Left colon (tissue), 2 donors: ENCODE measurements at regions of chr11 and their contacts with region 1.

Region 1: GRCh38 chr11:68297812-68298658 is 14.4 kb upstream of the LRP5 start:
- DNase-seq: peak; percentile 90 to 94
- ATAC-seq: peak; percentile 77

Region 2: GRCh38 chr11:68383976-68384501 is 86.0 kb after region 1 on chr11:
- intact Hi-C with region 1: loop called in 1 of 2 experiments (anchors 10 kb)
- DNase-seq: peak in 1 of 2 donors; percentile 83
- ATAC-seq: no peak